ENCODE measurements at regions of chr20 and their contacts with region 1.

Region 1: GRCh38 chr20:57432874-57433491 is 41.8 kb downstream of the RBM38 start:
- DNase-seq: peak; percentile 53
- ATAC-seq: peak; percentile 75
- H3K4me3 Mint-ChIP-seq: peak overlapping the region; percentile 59
- H3K27ac Mint-ChIP-seq: peak overlapping the region; percentile 84
- H3K4me1 Mint-ChIP-seq: peaks cover 79% of the 10 kb centered on the region
- H3K27me3 Mint-ChIP-seq: no peaks in the 10 kb centered on the region
- CTCF ChIP-seq: no peak

Region 2: GRCh38 chr20:57383447-57384347 is 49.3 kb before region 1 on chr20:
- CTCF ChIA-PET with region 1: interaction called, 23 read pairs
- POLR2A ChIA-PET with region 1: interaction called, 112 read pairs
- intact Hi-C with region 1: loop called (anchors 1 kb)
- DNase-seq: no peak
- ATAC-seq: no peak
- H3K4me3 Mint-ChIP-seq: no peak overlapping the region
- H3K27ac Mint-ChIP-seq: no peak overlapping the region
- H3K4me1 Mint-ChIP-seq: peaks cover 17% of the 10 kb centered on the region
- H3K27me3 Mint-ChIP-seq: no peaks in the 10 kb centered on the region
- CTCF ChIP-seq: no peak

Region 3: DNA sequence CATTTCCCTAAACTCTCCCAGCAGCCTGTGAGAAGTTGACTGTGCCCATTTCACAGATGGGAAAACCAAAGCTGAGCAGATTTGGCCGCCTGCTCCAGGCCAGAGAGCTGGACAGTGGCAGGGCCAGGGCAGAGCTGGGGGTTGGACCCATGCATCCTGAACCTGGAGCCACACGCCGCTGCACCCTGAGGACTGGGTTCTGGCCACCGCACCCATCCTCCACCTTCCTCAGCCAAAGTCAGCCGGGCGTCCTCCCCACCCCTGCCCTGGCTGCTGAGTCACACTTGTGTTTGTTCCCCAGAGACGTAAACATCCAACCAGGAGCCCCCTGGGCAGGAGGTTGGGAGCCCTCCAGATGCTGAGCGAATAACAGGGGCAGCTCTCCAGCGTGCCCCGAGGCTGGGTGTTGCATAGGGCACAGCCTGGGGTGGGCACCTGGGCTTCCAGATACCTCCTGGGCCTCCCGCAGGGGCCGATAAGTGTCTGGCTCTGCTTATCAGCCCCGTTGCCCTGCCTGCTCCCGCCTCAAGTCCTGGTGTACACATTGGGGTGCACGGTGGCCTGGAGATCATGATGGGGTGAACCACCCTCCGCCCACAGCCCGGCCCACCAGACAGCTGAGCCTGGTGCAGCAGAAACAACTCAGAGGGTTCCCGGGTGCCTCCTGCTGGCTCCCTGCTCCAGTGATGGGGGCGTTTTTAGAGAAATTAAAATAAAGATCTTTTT is 18.0 kb before region 1 on chr20:
- CTCF ChIA-PET with region 1: no interaction called
- POLR2A ChIA-PET with region 1: interaction called, 6 read pairs
- intact Hi-C with region 1: loop called (anchors 2 kb)
- DNase-seq: no peak
- ATAC-seq: no peak
- H3K4me3 Mint-ChIP-seq: no peak overlapping the region
- H3K27ac Mint-ChIP-seq: no peak overlapping the region
- H3K4me1 Mint-ChIP-seq: peaks cover 14% of the 10 kb centered on the region
- H3K27me3 Mint-ChIP-seq: no peaks in the 10 kb centered on the region
- CTCF ChIP-seq: no peak

Region 4: DNA sequence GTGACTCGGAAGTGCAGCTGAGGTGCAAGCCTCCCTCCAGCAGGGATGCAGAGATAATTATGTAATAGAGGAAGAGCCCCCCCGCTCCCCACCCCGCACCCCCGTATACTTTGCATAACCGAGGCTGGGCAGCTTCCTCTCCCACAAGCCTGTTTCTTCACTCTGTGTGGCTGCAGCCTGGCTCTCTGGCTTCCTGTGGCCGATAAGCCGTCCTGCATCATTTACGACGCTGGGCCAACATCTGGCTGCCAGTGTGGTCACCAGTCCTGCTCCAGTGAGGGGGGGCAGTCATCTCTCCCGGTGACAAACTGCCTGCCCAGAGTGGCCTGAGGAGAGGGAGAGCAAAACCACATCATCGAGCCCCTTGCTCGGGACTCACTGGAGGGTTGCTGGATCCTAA is 17.4 kb after region 1 on chr20:
- CTCF ChIA-PET with region 1: interaction called, 5 read pairs
- POLR2A ChIA-PET with region 1: interaction called, 9 read pairs
- intact Hi-C with region 1: loop called (anchors 1 kb)
- DNase-seq: peak; percentile 32
- ATAC-seq: peak; percentile 78
- H3K4me3 Mint-ChIP-seq: peak overlapping the region; percentile 69
- H3K27ac Mint-ChIP-seq: peak overlapping the region; percentile 63
- H3K4me1 Mint-ChIP-seq: peaks cover 65% of the 10 kb centered on the region
- H3K27me3 Mint-ChIP-seq: no peaks in the 10 kb centered on the region
- CTCF ChIP-seq: no peak

Region 5: GRCh38 chr20:57480444-57481160 is 47.6 kb after region 1 on chr20:
- CTCF ChIA-PET with region 1: no interaction called
- POLR2A ChIA-PET with region 1: interaction called, 11 read pairs
- intact Hi-C with region 1: loop called (anchors 1 kb)
- DNase-seq: peak; percentile 64
- ATAC-seq: peak; percentile 69
- H3K4me3 Mint-ChIP-seq: peak overlapping the region; percentile 73
- H3K27ac Mint-ChIP-seq: peak overlapping the region; percentile 81
- H3K4me1 Mint-ChIP-seq: peaks cover 82% of the 10 kb centered on the region
- H3K27me3 Mint-ChIP-seq: no peaks in the 10 kb centered on the region
- CTCF ChIP-seq: no peak

Region 6: GRCh38 chr20:57709931-57710799 is 277.2 kb after region 1 on chr20 and contains the start of gene PMEPA1:
- CTCF ChIA-PET with region 1: no interaction called
- POLR2A ChIA-PET with region 1: interaction called, 10 read pairs
- intact Hi-C with region 1: no loop called
- DNase-seq: peak; percentile 95
- ATAC-seq: peak; percentile 86
- H3K4me3 Mint-ChIP-seq: peak within 1 kb of the TSS; percentile 99
- H3K27ac Mint-ChIP-seq: peak within 1 kb of the TSS; percentile 92
- H3K4me1 Mint-ChIP-seq: peaks cover 59% of the 10 kb centered on the region
- H3K27me3 Mint-ChIP-seq: no peaks in the 10 kb centered on the region
- CTCF ChIP-seq: no peak
- total RNA-seq, gene PMEPA1: 33.1 and 34.8 TPM in 2 replicates

Measured in activated B cell treated with CpG ODN at 0.5 μM for 24 hours (primary cell).